ENCODE measurements at regions of chr18 and their contacts with region 1.

Region 1: GRCh38 chr18:58117786-58118403 is 73.9 kb downstream of the NEDD4L start:
- DNase-seq: no peak
- ATAC-seq: peak; percentile 86

Region 2: DNA sequence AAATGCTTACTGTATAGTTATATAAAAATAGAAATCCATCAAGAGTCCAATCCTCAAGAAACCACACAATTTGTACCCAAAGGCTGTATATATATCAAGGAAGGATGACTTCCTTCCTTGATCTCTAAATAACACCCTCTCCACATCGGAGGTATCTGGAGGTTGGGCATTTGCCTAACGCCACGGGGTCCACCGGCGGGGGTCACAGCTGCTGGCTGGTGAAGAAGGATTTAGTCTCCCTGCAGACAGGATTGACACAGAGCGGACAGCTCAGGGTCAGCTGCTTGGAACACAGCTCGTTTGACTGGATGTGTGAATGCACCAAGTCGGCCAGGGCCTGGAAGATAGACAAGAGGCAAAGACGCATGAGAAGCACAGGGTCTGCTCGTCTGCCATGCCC is 567.4 kb before region 1 on chr18:
- intact Hi-C with region 1: loop called (anchors 5 kb)
- DNase-seq: no peak
- ATAC-seq: no peak

Region 3: GRCh38 chr18:57881818-57882413 is 236.0 kb before region 1 on chr18:
- intact Hi-C with region 1: loop called (anchors 2 kb)
- DNase-seq: peak; percentile 76
- ATAC-seq: peak; percentile 94

Region 4: GRCh38 chr18:58043491-58044379 is 74.2 kb before region 1 on chr18 and contains the start of gene NEDD4L:
- intact Hi-C with region 1: loop called (anchors 5 kb)
- DNase-seq: peak; percentile 89
- ATAC-seq: peak; percentile 91
- total RNA-seq, gene NEDD4L: 30.9 TPM

Region 5: DNA sequence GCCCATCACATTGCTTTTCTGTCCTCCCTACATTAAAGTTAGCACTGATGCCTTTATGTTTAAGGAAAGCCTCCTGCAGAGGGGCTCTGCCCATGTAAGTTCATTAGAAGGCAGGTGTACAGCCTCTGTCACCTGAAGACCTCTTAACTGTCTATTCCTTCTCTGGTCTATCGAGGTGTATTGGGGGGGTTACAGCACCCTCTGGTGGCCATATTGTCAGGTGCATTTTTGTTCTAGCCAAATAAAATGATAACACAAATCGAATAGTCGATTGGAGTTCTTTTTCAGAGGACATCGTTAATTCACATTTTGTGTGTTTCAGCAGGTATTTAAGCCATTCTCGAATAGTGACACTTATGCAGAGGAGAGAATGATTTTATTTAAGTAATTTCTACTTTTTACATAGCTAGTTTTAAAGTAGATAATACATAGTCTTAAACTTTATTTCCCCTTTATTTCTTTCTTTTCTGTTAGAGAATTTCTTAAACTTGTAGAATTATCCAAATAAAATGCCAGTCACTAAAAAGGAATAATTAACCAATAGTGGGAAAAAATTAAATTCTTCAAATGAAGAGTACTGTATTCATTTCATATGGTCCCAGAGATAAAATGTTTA is 63.0 kb after region 1 on chr18:
- intact Hi-C with region 1: no loop called
- DNase-seq: no peak
- ATAC-seq: no peak

Region 6: DNA sequence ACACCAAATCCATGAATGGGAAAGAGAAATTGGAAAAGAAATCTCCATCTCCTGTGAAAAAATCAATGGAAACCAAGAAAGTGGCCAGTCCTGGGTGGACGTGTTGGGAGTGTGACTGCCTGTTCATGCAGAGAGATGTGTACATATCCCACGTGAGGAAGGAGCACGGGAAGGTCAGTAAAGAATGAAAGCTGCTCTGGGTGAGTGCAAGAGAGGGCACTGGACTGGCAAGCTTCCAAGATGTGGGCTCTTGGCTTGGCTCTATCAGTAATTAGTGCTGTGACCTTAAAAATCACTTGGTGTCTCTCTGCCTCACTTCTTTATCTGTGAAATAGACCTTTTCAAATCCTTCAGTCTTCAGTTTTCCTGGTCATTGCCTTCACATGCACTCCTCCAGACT is 835.7 kb after region 1 on chr18:
- intact Hi-C with region 1: no loop called
- DNase-seq: no peak
- ATAC-seq: no peak

Measured in sciatic nerve (tissue), 2 donors.